HCT116 (cell line): ENCODE measurements at regions of chr5 and their contacts with region 1.

Region 1: GRCh38 chr5:59367791-59368394 is 525.6 kb downstream of the PDE4D start:
- DNase-seq: peak; percentile 36
- ATAC-seq: peak; percentile 74
- H3K4me3 ChIP-seq: no peak overlapping the region
- H3K27ac ChIP-seq: no peak overlapping the region
- H3K4me1 ChIP-seq: no peaks in the 10 kb centered on the region
- H3K27me3 ChIP-seq: peaks cover 21% of the 10 kb centered on the region
- CTCF ChIP-seq: peak; percentile 49 to 79 (median 72); a peak in 5 of 6 replicates
- POLR2A ChIP-seq: no peak
- RAD21 ChIP-seq: peak; percentile 52

Region 2: GRCh38 chr5:58886315-58887207 is 481.3 kb before region 1 on chr5:
- CTCF ChIA-PET with region 1: no interaction called
- POLR2A ChIA-PET with region 1: no interaction called
- RAD21 ChIA-PET with region 1: no interaction called
- intact Hi-C with region 1: no loop called
- DNase-seq: peak; percentile 28
- ATAC-seq: peak; percentile 97
- H3K4me3 ChIP-seq: no peak overlapping the region
- H3K27ac ChIP-seq: no peak overlapping the region
- H3K4me1 ChIP-seq: no peaks in the 10 kb centered on the region
- H3K27me3 ChIP-seq: no peaks in the 10 kb centered on the region
- CTCF ChIP-seq: peak; percentile 39 to 95 (median 87); a peak in 5 of 6 replicates
- POLR2A ChIP-seq: no peak
- RAD21 ChIP-seq: peak; percentile 66

Region 3: GRCh38 chr5:59115345-59115744 is 252.5 kb before region 1 on chr5:
- CTCF ChIA-PET with region 1: no interaction called
- POLR2A ChIA-PET with region 1: no interaction called
- RAD21 ChIA-PET with region 1: no interaction called
- intact Hi-C with region 1: no loop called
- DNase-seq: no peak
- ATAC-seq: no peak
- H3K4me3 ChIP-seq: no peak overlapping the region
- H3K27ac ChIP-seq: no peak overlapping the region
- H3K4me1 ChIP-seq: no peaks in the 10 kb centered on the region
- H3K27me3 ChIP-seq: no peaks in the 10 kb centered on the region
- CTCF ChIP-seq: no peak
- POLR2A ChIP-seq: no peak
- RAD21 ChIP-seq: no peak

Region 4: DNA sequence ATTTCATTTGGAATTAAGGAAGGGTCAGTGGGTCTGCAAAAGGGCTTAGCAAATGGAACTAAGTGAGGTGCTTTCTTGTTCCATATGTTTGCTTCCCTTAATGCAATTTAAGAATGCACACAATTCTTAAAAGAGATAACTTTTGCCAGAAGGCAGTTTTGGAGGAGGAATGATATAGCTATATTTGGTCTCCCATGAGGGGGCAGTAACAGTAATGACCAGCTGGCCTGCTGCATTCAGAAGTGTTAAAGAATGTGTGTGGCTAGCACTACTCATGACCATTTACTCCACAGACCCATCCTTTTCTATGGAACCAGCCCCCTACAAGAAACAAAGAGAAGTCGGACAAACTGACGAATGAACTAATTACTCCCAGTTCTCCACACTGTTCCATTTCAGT is 146.1 kb before region 1 on chr5:
- CTCF ChIA-PET with region 1: interaction called, 10 read pairs
- POLR2A ChIA-PET with region 1: no interaction called
- RAD21 ChIA-PET with region 1: no interaction called
- intact Hi-C with region 1: no loop called
- DNase-seq: no peak
- ATAC-seq: no peak
- H3K4me3 ChIP-seq: no peak overlapping the region
- H3K27ac ChIP-seq: no peak overlapping the region
- H3K4me1 ChIP-seq: no peaks in the 10 kb centered on the region
- H3K27me3 ChIP-seq: peaks cover 12% of the 10 kb centered on the region
- CTCF ChIP-seq: no peak
- POLR2A ChIP-seq: no peak
- RAD21 ChIP-seq: no peak

Region 5: DNA sequence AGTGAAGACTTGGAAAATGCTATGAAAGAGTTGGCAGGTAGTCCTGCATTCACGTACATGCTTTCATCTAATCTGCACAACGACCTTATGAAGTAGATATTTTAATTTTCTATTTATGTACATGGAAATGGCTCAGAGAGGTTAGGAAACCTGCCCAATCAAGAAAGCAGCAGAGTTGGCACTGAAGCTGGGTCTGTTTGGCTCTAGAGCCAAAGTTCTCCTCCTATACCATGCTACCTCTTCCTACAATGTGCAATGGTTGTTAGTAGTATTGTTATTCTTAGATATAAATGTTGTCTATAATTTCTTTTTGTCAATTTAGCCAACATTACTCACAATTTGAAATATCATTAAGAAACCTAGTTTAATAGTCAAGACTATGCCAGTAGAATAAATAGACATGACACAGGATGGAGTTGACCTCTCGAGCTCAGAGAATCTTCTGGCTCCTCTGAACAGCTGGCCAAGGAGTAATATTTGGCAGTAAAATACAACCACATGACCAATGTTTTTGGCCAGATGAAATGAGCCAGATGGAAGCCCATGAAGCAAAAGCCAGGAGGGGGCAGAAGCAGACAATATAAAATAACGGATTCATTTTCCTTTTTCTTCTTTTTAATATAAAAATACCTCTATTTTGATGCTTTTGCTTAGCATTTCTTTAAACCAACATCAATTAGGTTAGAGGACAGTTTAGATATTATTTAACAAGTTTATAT is 16.7 kb before region 1 on chr5:
- CTCF ChIA-PET with region 1: interaction called, 12 read pairs
- POLR2A ChIA-PET with region 1: no interaction called
- RAD21 ChIA-PET with region 1: no interaction called
- intact Hi-C with region 1: no loop called
- DNase-seq: no peak
- ATAC-seq: no peak
- H3K4me3 ChIP-seq: no peak overlapping the region
- H3K27ac ChIP-seq: no peak overlapping the region
- H3K4me1 ChIP-seq: no peaks in the 10 kb centered on the region
- H3K27me3 ChIP-seq: peaks cover 5% of the 10 kb centered on the region; the same call in 1 of the 2 replicates
- CTCF ChIP-seq: no peak
- POLR2A ChIP-seq: no peak
- RAD21 ChIP-seq: no peak

Region 6: DNA sequence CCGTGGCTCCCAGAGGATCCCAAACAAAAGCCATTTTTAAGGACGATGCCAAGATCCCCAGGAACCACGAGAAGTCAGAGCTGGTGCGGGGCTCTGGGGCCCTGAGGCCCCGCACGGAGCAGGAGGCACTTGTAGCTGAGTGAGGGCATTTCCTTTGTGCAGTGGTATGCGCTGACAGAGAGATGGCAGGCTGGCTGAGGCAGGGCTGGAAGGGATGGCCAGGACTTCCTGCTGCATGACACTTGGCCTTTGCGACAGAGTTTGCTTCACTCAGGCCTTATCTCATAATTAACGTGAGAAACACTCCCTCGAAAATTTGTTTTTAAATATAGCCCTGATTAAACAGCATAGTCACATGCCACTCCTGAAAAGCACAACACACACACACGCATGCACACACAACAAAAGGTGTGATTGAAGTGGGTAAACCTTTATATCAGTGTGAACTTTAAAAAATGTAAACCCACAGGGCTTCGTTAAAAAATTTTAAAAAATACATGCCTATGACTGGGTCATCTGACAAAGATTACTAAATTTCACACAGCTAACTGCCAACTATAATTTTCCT is 11.0 kb before region 1 on chr5:
- CTCF ChIA-PET with region 1: interaction called, 12 read pairs
- POLR2A ChIA-PET with region 1: no interaction called
- RAD21 ChIA-PET with region 1: no interaction called
- intact Hi-C with region 1: no loop called
- DNase-seq: no peak
- ATAC-seq: no peak
- H3K4me3 ChIP-seq: no peak overlapping the region
- H3K27ac ChIP-seq: no peak overlapping the region
- H3K4me1 ChIP-seq: no peaks in the 10 kb centered on the region
- H3K27me3 ChIP-seq: peaks cover 29% of the 10 kb centered on the region
- CTCF ChIP-seq: no peak
- POLR2A ChIP-seq: no peak
- RAD21 ChIP-seq: no peak

Region 7: GRCh38 chr5:59380350-59380951 is 12.6 kb after region 1 on chr5:
- CTCF ChIA-PET with region 1: interaction called, 18 read pairs
- POLR2A ChIA-PET with region 1: no interaction called
- RAD21 ChIA-PET with region 1: no interaction called
- intact Hi-C with region 1: no loop called
- DNase-seq: peak; percentile 37
- ATAC-seq: peak; percentile 47; the same call in 1 of the 2 replicates
- H3K4me3 ChIP-seq: no peak overlapping the region
- H3K27ac ChIP-seq: no peak overlapping the region
- H3K4me1 ChIP-seq: no peaks in the 10 kb centered on the region
- H3K27me3 ChIP-seq: no peaks in the 10 kb centered on the region
- CTCF ChIP-seq: peak; percentile 25 to 54 (median 47); a peak in 4 of 6 replicates
- POLR2A ChIP-seq: no peak
- RAD21 ChIP-seq: peak; percentile 50